ENCODE measurements at regions of chr11 and their contacts with region 1.

Region 1: GRCh38 chr11:9653928-9654280 is 10.0 kb upstream of the SWAP70 start:
- DNase-seq: no peak
- H3K4me3 ChIP-seq: no peak overlapping the region
- H3K27ac ChIP-seq: no peak overlapping the region
- H3K4me1 ChIP-seq: peaks cover 5 to 17% (median 12%) of the 10 kb centered on the region in 4 experiments
- H3K27me3 ChIP-seq: no peaks in the 10 kb centered on the region

Region 2: DNA sequence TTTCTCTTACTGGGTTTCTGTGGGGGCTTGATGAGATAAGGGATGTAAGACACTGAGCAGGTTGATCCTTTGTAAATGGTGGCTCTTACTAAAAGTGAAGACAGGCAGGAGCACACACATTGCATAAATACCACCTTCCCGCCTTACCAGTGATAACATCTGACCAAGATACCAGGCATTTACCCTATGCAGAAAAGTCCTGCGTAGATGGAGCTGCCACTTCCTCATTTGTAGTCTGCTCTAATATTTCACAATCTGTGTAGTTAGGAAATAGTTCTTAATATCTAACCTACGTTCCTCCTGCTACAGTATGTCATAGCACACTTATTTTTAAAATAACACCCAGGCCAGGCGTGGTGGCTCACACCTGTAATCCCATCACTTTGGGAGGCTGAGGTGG is 13.9 kb before region 1 on chr11:
- CTCF ChIA-PET with region 1: interaction called, 10 read pairs
- POLR2A ChIA-PET with region 1: no interaction called
- DNase-seq: peak; percentile 78 to 92 (median 88)
- H3K4me3 ChIP-seq: no peak overlapping the region
- H3K27ac ChIP-seq: no peak overlapping the region
- H3K4me1 ChIP-seq: peaks cover 4 to 48% (median 14%) of the 10 kb centered on the region in 4 experiments
- H3K27me3 ChIP-seq: no peaks in the 10 kb centered on the region

Measured in common myeloid progenitor, CD34-positive (primary cell).